Activated T-helper 2 cell treated with anti-CD3 and anti-CD28 coated beads, Interferon-gamma antibody, Interleukin-2, Interleukin-4, amounts not matched to agents 10 μg/mL and 5 μg/mL and 100 μg/mL, durations not matched to agents 14 hours and 24 hours and 36 hours (primary cell): ENCODE measurements at regions of chr6 and their contacts with region 1.

Region 1: GRCh38 chr6:27242589-27243265 is 4.8 kb upstream of the PRSS16 start:
- DNase-seq: no peak
- H3K4me3 Mint-ChIP-seq: no peak overlapping the region
- H3K27ac Mint-ChIP-seq: no peak overlapping the region
- H3K4me1 Mint-ChIP-seq: peaks cover 11% of the 10 kb centered on the region
- H3K27me3 Mint-ChIP-seq: peaks cover 37% of the 10 kb centered on the region

Region 2: DNA sequence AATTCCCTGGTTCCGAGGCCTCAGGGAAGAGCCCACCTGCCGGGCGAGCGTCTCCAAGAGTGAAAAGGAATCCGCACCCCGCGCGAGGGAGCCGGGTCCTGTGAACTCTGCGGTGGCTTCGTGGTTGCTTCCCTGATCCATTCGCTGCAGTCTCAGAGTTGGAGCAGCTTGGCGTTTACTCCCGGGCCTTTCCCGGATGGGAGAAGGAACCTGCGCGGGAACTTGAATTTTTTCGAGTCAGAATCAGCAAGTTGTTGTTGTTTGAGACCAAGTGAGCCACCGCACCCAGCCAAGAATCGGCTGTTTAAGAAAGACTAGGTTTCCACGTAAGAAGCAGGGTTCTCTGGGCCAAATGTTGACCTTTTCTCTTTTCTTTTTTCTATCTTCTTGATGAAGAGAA is 17.6 kb after region 1 on chr6:
- intact Hi-C with region 1: loop called (anchors 2 kb)
- DNase-seq: no peak
- H3K4me3 Mint-ChIP-seq: no peak overlapping the region
- H3K27ac Mint-ChIP-seq: no peak overlapping the region
- H3K4me1 Mint-ChIP-seq: no peaks in the 10 kb centered on the region
- H3K27me3 Mint-ChIP-seq: peaks cover 54% of the 10 kb centered on the region